Heart left ventricle (tissue), 16 donors: ENCODE measurements at regions of chr15 and their contacts with region 1.

Region 1: DNA sequence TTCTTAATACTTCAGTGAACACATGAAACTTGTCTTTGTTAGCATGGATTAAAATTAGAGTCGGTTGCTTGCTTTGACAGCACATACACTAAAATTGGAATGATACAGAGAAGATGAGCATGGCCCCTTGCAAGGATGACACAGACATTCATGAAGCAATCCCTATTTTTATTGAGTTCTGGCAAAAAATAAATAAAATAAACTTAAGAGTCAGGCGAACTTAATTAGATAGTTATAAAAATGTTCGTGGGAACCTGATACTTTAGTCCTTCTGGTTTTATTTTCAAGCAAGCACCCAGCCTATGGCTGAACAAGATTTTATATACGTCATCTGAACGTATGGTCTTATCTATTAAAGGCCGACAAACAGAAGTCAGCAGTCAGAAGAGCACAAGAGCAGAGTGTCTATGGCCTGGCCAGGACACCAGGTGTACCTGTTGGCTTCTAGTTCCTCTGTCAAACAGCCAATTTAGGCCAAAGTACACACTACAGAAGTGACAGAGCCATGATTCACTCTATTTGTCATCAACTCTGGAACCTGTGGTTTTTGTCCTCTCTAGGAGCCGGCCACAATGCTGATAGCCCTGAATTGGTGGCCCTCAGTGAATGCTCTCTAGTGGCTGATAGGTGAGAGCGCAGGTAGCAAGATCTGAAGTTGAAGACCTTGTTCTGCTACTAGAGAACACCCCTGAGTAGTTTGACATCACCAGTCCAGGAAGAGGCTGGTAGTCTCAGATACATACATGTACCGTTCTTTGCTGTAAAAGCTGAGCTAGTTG is 64.3 kb downstream of the LEO1 start:
- DNase-seq: no peak
- ATAC-seq: peak in 1 of 4 donors; percentile 41
- H3K4me3 ChIP-seq: no peak overlapping the region
- H3K27ac ChIP-seq: no peak overlapping the region
- H3K4me1 ChIP-seq: no peaks in the 10 kb centered on the region
- H3K27me3 ChIP-seq: no peaks in the 10 kb centered on the region
- CTCF ChIP-seq: no peak
- POLR2A ChIP-seq: no peak

Region 2: DNA sequence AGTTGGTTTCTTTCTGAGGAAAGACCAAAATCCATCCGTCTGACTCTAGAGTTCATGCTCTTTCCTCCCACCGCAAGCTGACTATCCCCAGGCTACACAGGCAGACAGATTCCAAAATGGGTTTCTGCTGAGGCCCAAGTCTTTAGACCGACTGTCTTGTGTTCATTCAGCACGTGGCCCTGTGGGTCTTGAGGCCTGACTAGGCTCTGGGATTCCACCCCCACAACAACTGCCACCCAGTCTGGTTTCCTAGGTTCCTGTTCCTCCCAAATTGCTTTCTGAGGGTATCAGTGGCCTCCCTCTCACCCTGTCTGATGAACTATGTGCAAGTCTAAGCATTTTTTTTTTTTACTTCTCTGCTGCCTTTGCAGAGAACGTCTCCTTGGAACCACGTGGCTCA is 636.6 kb before region 1 on chr15:
- intact Hi-C with region 1: no loop called
- DNase-seq: no peak
- ATAC-seq: peak in 1 of 4 donors; percentile 71
- H3K4me3 ChIP-seq: no peak overlapping the region
- H3K27ac ChIP-seq: no peak overlapping the region
- H3K4me1 ChIP-seq: peaks cover 0 to 17% (median 6%) of the 10 kb centered on the region in 12 donors
- H3K27me3 ChIP-seq: peaks cover 0 to 27% (median 0%) of the 10 kb centered on the region in 9 donors
- CTCF ChIP-seq: no peak
- POLR2A ChIP-seq: no peak

Region 3: GRCh38 chr15:51782357-51782896 is 124.9 kb before region 1 on chr15:
- intact Hi-C with region 1: loop called in 1 of 10 experiments (anchors 10 kb)
- DNase-seq: no peak
- ATAC-seq: no peak
- H3K4me3 ChIP-seq: no peak overlapping the region
- H3K27ac ChIP-seq: no peak overlapping the region
- H3K4me1 ChIP-seq: no peaks in the 10 kb centered on the region
- H3K27me3 ChIP-seq: no peaks in the 10 kb centered on the region
- CTCF ChIP-seq: peak in 4 of 12 donors; percentile 14 to 29 (median 22)
- POLR2A ChIP-seq: no peak